ENCODE measurements at regions of chr15 and their contacts with region 1.

Region 1: GRCh38 chr15:41603941-41604911 is 45.2 kb downstream of the TYRO3 start:
- DNase-seq: peak; percentile 31 to 71 (median 40)
- H3K4me3 ChIP-seq: no peak overlapping the region
- H3K4me3 Mint-ChIP-seq: peak overlapping the region in 6 of 7 donors; percentile 5 to 79 (median 70)
- H3K27ac ChIP-seq: no peak overlapping the region
- H3K27ac Mint-ChIP-seq: peak overlapping the region in 1 of 8 donors; percentile 43
- H3K4me1 ChIP-seq: peaks cover 6% of the 10 kb centered on the region
- H3K4me1 Mint-ChIP-seq: peaks cover 7 to 12% (median 10%) of the 10 kb centered on the region in 3 donors
- H3K27me3 ChIP-seq: no peaks in the 10 kb centered on the region
- H3K27me3 Mint-ChIP-seq: peaks cover 3 to 26% of the 10 kb centered on the region in 2 donors

Region 2: GRCh38 chr15:41647262-41647661 is 43.0 kb after region 1 on chr15:
- CTCF ChIA-PET with region 1: no interaction called
- POLR2A ChIA-PET with region 1: no interaction called
- DNase-seq: no peak
- H3K4me3 ChIP-seq: no peak overlapping the region
- H3K4me3 Mint-ChIP-seq: no peak overlapping the region
- H3K27ac ChIP-seq: no peak overlapping the region
- H3K27ac Mint-ChIP-seq: no peak overlapping the region
- H3K4me1 ChIP-seq: no peaks in the 10 kb centered on the region
- H3K4me1 Mint-ChIP-seq: no peaks in the 10 kb centered on the region
- H3K27me3 ChIP-seq: no peaks in the 10 kb centered on the region
- H3K27me3 Mint-ChIP-seq: peaks cover 0 to 1% of the 10 kb centered on the region in 2 donors

Region 3: GRCh38 chr15:41660235-41661077 is 56.2 kb after region 1 on chr15 and contains the start of gene MGA:
- CTCF ChIA-PET with region 1: interaction called, 17 read pairs
- POLR2A ChIA-PET with region 1: no interaction called
- DNase-seq: peak; percentile 79 to 93 (median 90)
- H3K4me3 ChIP-seq: peak within 1 kb of the TSS; percentile 85
- H3K4me3 Mint-ChIP-seq: peak within 1 kb of the TSS; percentile 85 to 93 (median 90)
- H3K27ac ChIP-seq: peak within 1 kb of the TSS; percentile 94
- H3K27ac Mint-ChIP-seq: peak within 1 kb of the TSS; percentile 81 to 98 (median 96)
- H3K4me1 ChIP-seq: peaks cover 42% of the 10 kb centered on the region
- H3K4me1 Mint-ChIP-seq: peaks cover 46 to 56% (median 52%) of the 10 kb centered on the region in 3 donors
- H3K27me3 ChIP-seq: no peaks in the 10 kb centered on the region
- H3K27me3 Mint-ChIP-seq: peaks cover 9 to 10% of the 10 kb centered on the region in 2 donors
- total RNA-seq, gene MGA: 40.1 to 41.5 TPM

Measured in CD8-positive, alpha-beta memory T cell (primary cell).